ENCODE measurements at regions of chr14 and their contacts with region 1.

Region 1: DNA sequence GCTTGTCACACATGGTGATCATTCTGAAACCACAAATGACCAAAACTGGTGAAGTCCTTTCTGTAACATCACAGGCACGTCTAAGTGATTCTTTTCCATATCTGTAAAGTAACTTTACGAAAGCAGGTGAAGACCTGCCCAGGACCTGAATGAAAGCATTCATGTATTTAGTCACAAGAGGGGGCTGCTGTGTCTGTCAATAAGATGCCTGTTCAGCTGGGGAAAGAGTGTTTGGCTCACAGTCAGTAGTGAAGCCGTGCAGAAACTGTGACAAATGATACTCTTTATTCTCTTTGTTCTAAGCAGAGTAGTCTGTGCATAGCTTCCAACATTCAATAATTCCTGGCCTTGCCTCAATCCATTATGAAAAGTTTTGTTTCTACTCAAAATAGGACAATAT is 373.5 kb upstream of the OR4E1 start:
- DNase-seq: peak; percentile 65
- ATAC-seq: peak; percentile 94
- H3K4me3 Mint-ChIP-seq: peak overlapping the region; percentile 61
- H3K27ac Mint-ChIP-seq: peak overlapping the region; percentile 87
- H3K4me1 Mint-ChIP-seq: peaks cover 49% of the 10 kb centered on the region
- H3K27me3 Mint-ChIP-seq: peaks cover 2% of the 10 kb centered on the region

Region 2: GRCh38 chr14:22070119-22071011 is 23.2 kb after region 1 on chr14:
- CTCF ChIA-PET with region 1: interaction called, 50 read pairs
- POLR2A ChIA-PET with region 1: interaction called, 9 read pairs
- DNase-seq: peak; percentile 78
- ATAC-seq: peak; percentile 89
- H3K4me3 Mint-ChIP-seq: peak overlapping the region; percentile 94
- H3K27ac Mint-ChIP-seq: peak overlapping the region; percentile 96
- H3K4me1 Mint-ChIP-seq: peaks cover 50% of the 10 kb centered on the region
- H3K27me3 Mint-ChIP-seq: no peaks in the 10 kb centered on the region

Region 3: GRCh38 chr14:22084393-22085281 is 37.5 kb after region 1 on chr14:
- CTCF ChIA-PET with region 1: interaction called, 14 read pairs
- POLR2A ChIA-PET with region 1: no interaction called
- DNase-seq: peak; percentile 53
- ATAC-seq: peak; percentile 49
- H3K4me3 Mint-ChIP-seq: peak overlapping the region; percentile 45
- H3K27ac Mint-ChIP-seq: peak overlapping the region; percentile 72
- H3K4me1 Mint-ChIP-seq: peaks cover 34% of the 10 kb centered on the region
- H3K27me3 Mint-ChIP-seq: no peaks in the 10 kb centered on the region

Region 4: GRCh38 chr14:22375321-22375930 is 328.3 kb after region 1 on chr14:
- CTCF ChIA-PET with region 1: no interaction called
- POLR2A ChIA-PET with region 1: no interaction called
- DNase-seq: no peak
- ATAC-seq: no peak
- H3K4me3 Mint-ChIP-seq: no peak overlapping the region
- H3K27ac Mint-ChIP-seq: no peak overlapping the region
- H3K4me1 Mint-ChIP-seq: no peaks in the 10 kb centered on the region
- H3K27me3 Mint-ChIP-seq: no peaks in the 10 kb centered on the region

Measured in activated CD8-positive, alpha-beta T cell treated with anti-CD3 and anti-CD28 coated beads, Interleukin-2, amount 10 ng/mL, durations not matched to agents 7 days and 5 days (primary cell).